ENCODE measurements at regions of chr13 and their contacts with region 1.

Region 1: GRCh38 chr13:20118268-20119140 is 42.3 kb downstream of the GJA3 start:
- DNase-seq: peak; percentile 49
- ATAC-seq: peak; percentile 3
- H3K4me3 Mint-ChIP-seq: peak overlapping the region; percentile 79
- H3K27ac Mint-ChIP-seq: peak overlapping the region; percentile 80
- H3K4me1 Mint-ChIP-seq: peaks cover 18% of the 10 kb centered on the region
- H3K27me3 Mint-ChIP-seq: no peaks in the 10 kb centered on the region

Region 2: GRCh38 chr13:19633479-19634255 is 484.8 kb before region 1 on chr13 and contains the start of gene MPHOSPH8:
- CTCF ChIA-PET with region 1: no interaction called
- POLR2A ChIA-PET with region 1: no interaction called
- intact Hi-C with region 1: loop called in 1 of 2 experiments (anchors 2 kb)
- DNase-seq: peak; percentile 96
- ATAC-seq: peak; percentile 98
- H3K4me3 Mint-ChIP-seq: peak within 1 kb of the TSS; percentile 99
- H3K27ac Mint-ChIP-seq: peak within 1 kb of the TSS; percentile 99
- H3K4me1 Mint-ChIP-seq: peaks cover 27% of the 10 kb centered on the region
- H3K27me3 Mint-ChIP-seq: no peaks in the 10 kb centered on the region
- total RNA-seq, gene MPHOSPH8: 39.1 to 39.8 TPM

Region 3: DNA sequence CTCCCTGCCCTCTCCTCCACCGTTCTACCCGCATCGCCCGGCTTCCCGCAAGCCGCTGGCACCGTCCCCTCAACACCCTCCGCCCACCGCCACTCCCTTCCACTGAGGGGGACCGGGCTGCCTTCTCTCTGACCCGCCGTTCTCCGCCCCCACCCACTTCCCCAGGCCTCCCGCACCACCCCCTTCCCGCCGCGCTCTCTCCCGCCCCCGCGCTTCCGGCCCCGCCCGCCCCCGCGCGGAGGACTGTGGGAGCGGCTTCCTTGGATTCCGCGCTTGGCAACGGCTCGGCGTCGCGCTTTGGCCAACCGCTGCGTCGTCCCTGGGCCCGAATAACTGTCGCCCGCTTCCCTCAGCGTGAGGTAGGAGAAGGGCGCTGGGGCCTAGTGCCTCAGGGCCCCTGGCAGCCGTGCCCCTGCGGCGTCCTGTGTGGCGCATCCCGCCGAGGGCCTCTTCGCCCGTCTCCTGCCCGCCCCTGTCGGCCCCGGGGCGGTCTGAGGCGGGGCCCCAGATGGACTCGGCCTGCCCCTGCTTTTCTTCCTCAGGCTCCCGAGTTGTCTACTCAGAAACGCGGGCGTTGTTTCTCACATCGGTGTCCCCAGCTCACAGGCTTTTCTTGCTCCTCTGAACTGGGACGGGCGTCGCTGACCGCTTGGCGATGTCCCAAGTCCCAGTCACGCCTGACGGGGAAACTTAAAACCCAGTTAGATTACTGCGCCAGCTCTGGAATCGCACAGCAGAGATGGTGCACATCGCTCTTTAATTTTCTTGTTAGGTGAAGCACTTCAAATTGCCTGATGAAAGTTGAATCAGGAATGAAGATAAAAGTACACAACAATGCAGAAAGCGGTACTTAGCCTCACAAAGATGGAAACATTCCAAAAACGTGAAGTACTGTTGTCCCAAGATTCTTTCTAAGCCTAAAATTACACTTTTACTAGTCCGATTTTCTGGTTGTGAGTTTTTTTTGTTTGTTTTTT is 448.7 kb after region 1 on chr13 and contains the start of gene IFT88:
- CTCF ChIA-PET with region 1: no interaction called
- POLR2A ChIA-PET with region 1: no interaction called
- intact Hi-C with region 1: loop called in 1 of 2 experiments (anchors 2 kb)
- DNase-seq: peak; percentile 89
- ATAC-seq: peak; percentile 83
- H3K4me3 Mint-ChIP-seq: peak within 1 kb of the TSS; percentile 81
- H3K27ac Mint-ChIP-seq: peak within 1 kb of the TSS; percentile 80
- H3K4me1 Mint-ChIP-seq: peaks cover 19% of the 10 kb centered on the region
- H3K27me3 Mint-ChIP-seq: no peaks in the 10 kb centered on the region
- total RNA-seq, gene IFT88: 4.7 to 4.8 TPM

Region 4: DNA sequence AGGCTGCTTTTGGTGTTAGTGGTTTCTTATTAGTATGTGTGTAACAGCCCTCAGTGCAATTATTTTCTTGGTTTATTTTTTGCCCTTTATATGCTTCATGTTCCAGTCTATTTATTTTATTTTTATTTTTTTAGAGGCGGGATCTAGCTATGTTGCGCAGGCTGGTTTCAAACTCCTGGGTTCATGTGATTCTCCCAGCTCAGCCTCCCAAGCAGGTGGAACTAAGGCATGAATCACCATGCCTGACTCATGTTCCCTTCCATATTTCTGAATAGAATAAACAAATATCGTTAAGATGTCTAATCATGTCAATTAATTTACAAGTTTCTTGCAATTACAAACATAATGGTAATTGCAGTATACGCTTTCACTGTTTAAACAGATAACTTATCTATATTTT is 1046.1 kb after region 1 on chr13:
- CTCF ChIA-PET with region 1: no interaction called
- POLR2A ChIA-PET with region 1: no interaction called
- intact Hi-C with region 1: no loop called
- DNase-seq: no peak
- ATAC-seq: no peak
- H3K4me3 Mint-ChIP-seq: no peak overlapping the region
- H3K27ac Mint-ChIP-seq: no peak overlapping the region
- H3K4me1 Mint-ChIP-seq: no peaks in the 10 kb centered on the region
- H3K27me3 Mint-ChIP-seq: no peaks in the 10 kb centered on the region

Measured in activated CD4-positive, alpha-beta T cell treated with anti-CD3 and anti-CD28 coated beads for 36 hours (primary cell).